Heart left ventricle (tissue), 16 donors: ENCODE measurements at regions of chr7 and their contacts with region 1.

Region 1: GRCh38 chr7:107563775-107564552 is at the starts of genes COG5 and DUS4L:
- DNase-seq: peak; percentile 82 to 92 (median 87)
- ATAC-seq: peak; percentile 92 to 97 (median 96)
- H3K4me3 ChIP-seq: peak within 1 kb of the TSS; percentile 70 to 97 (median 83)
- H3K27ac ChIP-seq: peak within 1 kb of the TSS; percentile 88 to 99 (median 94)
- H3K4me1 ChIP-seq: peaks cover 6 to 54% (median 40%) of the 10 kb centered on the region in 12 donors
- H3K27me3 ChIP-seq: no peaks in the 10 kb centered on the region
- CTCF ChIP-seq: peak in 1 of 12 donors; percentile 3
- POLR2A ChIP-seq: peak in 1 of 2 donors; percentile 66
- total RNA-seq, gene COG5: 30.3 to 61.6 (median 53.8) TPM
- total RNA-seq, gene DUS4L: 5.3 to 11.7 (median 8.9) TPM

Region 2: DNA sequence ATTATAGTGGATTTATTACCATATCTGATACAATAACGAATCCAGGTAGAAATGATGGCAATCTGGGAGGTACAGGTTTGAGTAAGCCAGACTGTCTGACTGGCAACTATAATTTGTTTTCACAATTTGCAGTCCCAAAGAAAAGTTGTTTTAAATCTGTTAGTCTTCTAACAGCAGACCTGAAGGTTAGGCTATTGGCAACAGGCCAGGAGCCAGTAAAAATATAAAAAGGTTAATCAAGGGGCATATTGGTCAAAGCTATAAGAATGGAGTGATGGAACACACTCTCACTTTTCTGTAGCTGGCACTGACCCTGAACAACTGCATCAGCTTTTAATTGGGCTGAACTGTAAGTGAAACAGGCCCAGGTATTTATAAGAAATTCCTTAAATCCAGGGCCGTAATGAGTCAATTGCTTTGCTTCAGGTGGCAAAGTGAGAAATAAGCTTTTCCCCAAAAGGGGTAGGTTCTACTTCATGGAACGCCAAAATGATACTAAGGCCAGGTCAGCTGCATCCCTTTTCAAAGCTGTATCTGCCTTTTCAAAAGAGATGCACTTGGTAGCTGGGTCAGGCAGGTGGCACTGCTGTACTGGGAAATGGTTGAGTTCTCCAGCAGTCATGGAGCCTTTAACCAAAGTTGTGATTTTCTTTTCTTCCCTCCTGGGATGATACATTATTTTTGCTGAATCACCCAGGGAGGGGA is 101.1 kb before region 1 on chr7:
- intact Hi-C with region 1: loop called in 1 of 10 experiments (anchors 10 kb)
- DNase-seq: peak in 4 of 5 donors; percentile 49 to 72 (median 59)
- ATAC-seq: peak; percentile 74 to 92 (median 91)
- H3K4me3 ChIP-seq: no peak overlapping the region
- H3K27ac ChIP-seq: peak overlapping the region in 10 of 12 donors; percentile 8 to 52 (median 36)
- H3K4me1 ChIP-seq: peaks cover 0 to 25% (median 1%) of the 10 kb centered on the region in 12 donors
- H3K27me3 ChIP-seq: no peaks in the 10 kb centered on the region
- CTCF ChIP-seq: peak; percentile 53 to 90 (median 78)
- POLR2A ChIP-seq: no peak

Region 3: DNA sequence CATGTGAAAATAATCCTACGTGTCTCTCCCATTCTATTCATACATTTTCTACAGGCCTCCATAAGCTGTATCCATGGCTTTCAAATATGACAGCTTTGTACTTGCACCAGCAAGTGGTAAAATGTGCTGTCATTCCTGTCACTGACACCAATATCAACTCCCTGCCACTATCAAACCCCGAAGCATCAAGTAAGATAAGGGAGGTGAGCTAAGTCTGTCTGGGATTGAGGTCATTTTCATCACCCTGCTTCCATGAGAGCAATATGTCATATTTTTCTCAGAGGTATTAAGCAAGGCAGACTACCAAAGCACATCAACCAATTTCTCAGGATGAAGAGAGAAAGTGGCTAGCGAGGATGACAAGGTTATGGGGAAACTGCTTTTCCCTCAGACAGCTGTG is 83.0 kb before region 1 on chr7:
- intact Hi-C with region 1: loop called in 3 of 10 experiments (anchors 5 to 10 kb)
- DNase-seq: peak in 3 of 5 donors; percentile 25 to 32 (median 30)
- ATAC-seq: peak; percentile 91 to 98 (median 96)
- H3K4me3 ChIP-seq: peak overlapping the region in 10 of 12 donors; percentile 1 to 52 (median 39)
- H3K27ac ChIP-seq: peak overlapping the region; percentile 12 to 84 (median 74)
- H3K4me1 ChIP-seq: peaks cover 0 to 15% (median 1%) of the 10 kb centered on the region in 12 donors
- H3K27me3 ChIP-seq: no peaks in the 10 kb centered on the region
- CTCF ChIP-seq: no peak
- POLR2A ChIP-seq: no peak

Region 4: GRCh38 chr7:107579885-107580715 is 16.1 kb after region 1 on chr7 and contains the start of gene BCAP29:
- intact Hi-C with region 1: loop called in 1 of 10 experiments (anchors 1 kb)
- DNase-seq: peak; percentile 85 to 91 (median 87)
- ATAC-seq: peak; percentile 84 to 98 (median 96)
- H3K4me3 ChIP-seq: peak within 1 kb of the TSS; percentile 74 to 89 (median 81)
- H3K27ac ChIP-seq: peak within 1 kb of the TSS; percentile 95 to 99 (median 97)
- H3K4me1 ChIP-seq: peaks cover 0 to 44% (median 26%) of the 10 kb centered on the region in 12 donors
- H3K27me3 ChIP-seq: no peaks in the 10 kb centered on the region
- CTCF ChIP-seq: peak in 9 of 12 donors; percentile 27 to 65 (median 48)
- POLR2A ChIP-seq: peak; percentile 71 to 90
- total RNA-seq, gene BCAP29: 96.2 to 241 (median 117) TPM

Region 5: DNA sequence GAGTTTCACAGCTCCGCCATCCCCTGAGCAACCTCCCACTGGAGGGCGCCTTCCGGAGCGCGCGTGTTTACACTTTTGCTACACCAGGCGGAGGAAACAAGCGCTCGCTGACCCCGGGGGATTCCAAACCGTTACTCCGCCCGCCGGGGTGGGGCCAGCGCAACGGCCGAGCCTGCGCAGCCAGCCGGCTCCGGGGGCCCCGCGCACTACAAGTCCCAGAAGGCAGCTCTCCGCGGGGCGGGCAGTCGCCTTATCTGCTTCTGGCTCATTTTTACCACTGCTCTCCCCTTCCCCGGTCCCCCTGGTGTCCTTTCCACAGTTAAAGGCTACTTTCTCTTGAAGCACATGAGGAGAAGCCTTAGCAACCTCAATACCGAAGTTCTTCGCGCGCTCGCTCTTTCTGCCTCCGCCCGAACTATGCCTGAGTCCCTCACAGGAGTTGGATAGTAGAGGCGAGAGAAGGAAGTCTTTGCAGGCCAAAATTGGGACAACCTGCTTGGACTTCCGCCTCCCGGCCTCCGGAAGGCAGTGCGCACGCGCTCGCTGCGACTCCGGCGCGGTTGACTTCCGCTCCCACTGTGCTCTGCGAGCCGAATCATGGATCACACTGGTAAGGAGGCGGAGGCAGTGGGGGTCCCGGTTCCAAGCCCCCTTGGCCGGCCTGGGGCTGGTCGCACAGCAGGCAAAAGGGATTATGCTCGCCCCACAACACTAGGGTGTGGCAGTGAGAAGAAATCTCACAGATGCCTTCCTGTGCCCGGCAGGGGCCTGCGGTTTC is 179.8 kb after region 1 on chr7 and contains the start of gene CBLL1:
- intact Hi-C with region 1: loop called in 1 of 10 experiments (anchors 10 kb)
- DNase-seq: peak; percentile 97 to 98 (median 98)
- ATAC-seq: peak; percentile 98 to 99 (median 98)
- H3K4me3 ChIP-seq: peak within 1 kb of the TSS; percentile 67 to 94 (median 82)
- H3K27ac ChIP-seq: peak within 1 kb of the TSS; percentile 92 to 99 (median 97)
- H3K4me1 ChIP-seq: peaks cover 7 to 48% (median 28%) of the 10 kb centered on the region in 12 donors
- H3K27me3 ChIP-seq: no peaks in the 10 kb centered on the region
- CTCF ChIP-seq: peak; percentile 51 to 94 (median 74)
- POLR2A ChIP-seq: peak in 1 of 2 donors; percentile 72
- total RNA-seq, gene CBLL1: 17.1 to 39.8 (median 24.3) TPM